Right cardiac atrium (tissue), 5 donors: ENCODE measurements at regions of chr15 and their contacts with region 1.

Region 1: DNA sequence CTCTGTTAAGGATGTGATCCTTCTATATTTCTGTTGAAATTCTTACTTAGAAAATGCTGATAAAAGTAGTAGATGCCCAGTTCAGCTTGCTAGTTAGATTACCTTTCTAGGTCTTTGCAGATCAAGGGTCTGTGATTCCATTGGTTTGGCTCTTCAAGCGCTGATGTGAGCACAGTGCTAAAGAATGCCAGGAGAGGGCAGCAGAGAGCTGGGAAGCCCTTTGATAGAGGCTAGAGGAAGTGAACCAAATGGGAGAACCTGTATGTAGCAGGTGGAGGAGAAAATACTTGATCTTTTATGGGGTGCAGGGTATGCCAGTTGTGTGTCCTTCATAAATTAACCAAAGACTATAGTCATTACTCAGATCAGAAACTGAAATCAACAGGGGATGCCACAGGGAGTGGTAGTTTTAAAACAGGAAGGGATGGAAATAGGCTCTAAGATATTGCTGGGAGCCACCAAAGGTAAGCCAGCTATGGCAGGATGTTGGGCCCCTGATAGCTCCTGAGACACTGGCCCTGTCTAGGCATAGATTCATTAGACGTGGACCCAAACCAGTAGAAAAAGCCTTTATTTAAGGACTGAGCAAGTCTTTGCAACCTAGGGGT is 677.4 kb downstream of the SQOR start:
- DNase-seq: peak; percentile 57 to 84 (median 72)
- ATAC-seq: peak; percentile 88 to 89
- H3K4me3 ChIP-seq: no peak overlapping the region
- H3K27ac ChIP-seq: no peak overlapping the region
- H3K4me1 ChIP-seq: no peaks in the 10 kb centered on the region
- H3K27me3 ChIP-seq: no peaks in the 10 kb centered on the region

Region 2: DNA sequence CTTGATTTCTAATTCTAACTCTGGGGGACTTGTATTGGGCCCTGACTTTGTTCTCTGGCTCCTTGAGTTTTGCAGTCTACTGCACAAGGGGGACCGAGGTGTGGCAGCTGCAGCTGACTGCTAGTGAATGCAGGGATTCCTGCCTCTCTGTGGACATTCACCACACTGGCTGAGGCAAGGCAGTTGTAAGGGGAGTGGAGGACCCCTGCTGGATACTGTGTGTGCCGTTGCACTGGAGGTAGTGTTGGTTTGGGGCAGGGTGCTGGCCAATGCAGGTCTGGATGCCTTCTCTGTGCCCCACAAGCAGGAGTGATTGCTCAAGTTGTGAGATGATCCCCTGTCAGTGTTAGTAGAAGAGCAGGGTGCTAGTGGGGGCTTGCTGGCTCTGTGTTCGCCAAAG is 51.3 kb before region 1 on chr15:
- intact Hi-C with region 1: loop called in 1 of 4 experiments (anchors 10 kb)
- DNase-seq: no peak
- ATAC-seq: no peak
- H3K4me3 ChIP-seq: no peak overlapping the region
- H3K27ac ChIP-seq: no peak overlapping the region
- H3K4me1 ChIP-seq: no peaks in the 10 kb centered on the region
- H3K27me3 ChIP-seq: no peaks in the 10 kb centered on the region